ENCODE measurements at regions of chr11 and their contacts with region 1.

Region 1: GRCh38 chr11:35040221-35040942 is 98.6 kb upstream of the CD44 start:
- DNase-seq: no peak
- ATAC-seq: peak; percentile 66
- H3K4me3 Mint-ChIP-seq: peak overlapping the region; percentile 77
- H3K27ac Mint-ChIP-seq: peak overlapping the region; percentile 94
- H3K4me1 Mint-ChIP-seq: peaks cover 75% of the 10 kb centered on the region
- H3K27me3 Mint-ChIP-seq: no peaks in the 10 kb centered on the region
- CTCF ChIP-seq: no peak

Region 2: DNA sequence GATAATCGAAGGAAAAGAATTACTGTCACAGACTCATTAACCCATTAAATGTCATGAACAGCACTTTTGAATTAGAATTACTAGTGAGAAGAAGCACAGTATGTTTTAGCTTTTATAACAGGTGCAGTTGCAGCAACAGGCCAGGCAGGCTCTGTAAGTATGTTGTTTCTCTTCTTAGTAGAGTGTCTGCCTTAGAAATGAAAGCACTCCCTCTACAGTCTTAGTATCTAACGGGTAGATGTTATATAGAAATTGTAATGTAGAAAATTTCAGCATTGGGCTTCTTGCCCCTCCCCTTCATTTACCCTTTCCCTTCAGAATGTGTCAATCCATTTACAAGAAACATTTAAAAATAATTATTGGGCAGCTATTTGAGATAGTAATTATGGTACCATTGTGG is 1695.8 kb before region 1 on chr11:
- CTCF ChIA-PET with region 1: no interaction called
- POLR2A ChIA-PET with region 1: no interaction called
- intact Hi-C with region 1: no loop called
- DNase-seq: no peak
- ATAC-seq: no peak
- H3K4me3 Mint-ChIP-seq: no peak overlapping the region
- H3K27ac Mint-ChIP-seq: peak overlapping the region; percentile 18
- H3K4me1 Mint-ChIP-seq: peaks cover 24% of the 10 kb centered on the region
- H3K27me3 Mint-ChIP-seq: no peaks in the 10 kb centered on the region
- CTCF ChIP-seq: no peak

Region 3: DNA sequence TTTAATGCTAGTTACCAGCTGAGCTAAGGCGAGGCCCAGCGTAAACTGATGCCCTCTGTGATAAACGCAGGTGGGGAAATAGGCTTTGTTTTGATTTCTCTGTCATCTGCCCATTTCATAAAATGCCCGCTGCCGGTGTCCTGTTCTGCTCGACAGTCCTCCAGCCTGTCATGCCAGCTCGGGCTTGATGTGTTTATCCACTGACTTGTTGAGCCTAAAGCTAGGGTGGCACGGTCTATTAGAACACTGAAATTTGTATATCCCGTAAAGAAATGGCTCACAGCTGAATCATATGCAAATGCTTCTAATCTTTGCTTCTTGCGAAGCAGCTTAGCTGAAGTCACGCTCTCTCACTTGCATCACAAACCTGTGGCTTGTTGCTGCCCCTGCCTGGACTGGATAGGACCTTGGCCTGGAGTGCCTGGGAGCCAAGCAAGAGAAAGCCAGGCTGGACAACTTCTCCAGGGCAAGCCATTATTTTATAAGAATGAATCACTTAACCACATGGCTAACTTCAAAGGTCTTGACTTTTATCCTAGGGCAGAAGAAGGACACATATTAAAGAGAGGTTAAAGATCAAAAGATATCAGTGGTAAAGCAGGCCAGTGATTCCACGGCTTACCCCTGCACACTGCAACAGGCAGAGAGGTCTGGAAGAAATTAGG is 386.4 kb before region 1 on chr11:
- CTCF ChIA-PET with region 1: no interaction called
- POLR2A ChIA-PET with region 1: no interaction called
- intact Hi-C with region 1: loop called (anchors 5 kb)
- DNase-seq: no peak
- ATAC-seq: peak; percentile 65
- H3K4me3 Mint-ChIP-seq: peak overlapping the region; percentile 56
- H3K27ac Mint-ChIP-seq: peak overlapping the region; percentile 80
- H3K4me1 Mint-ChIP-seq: peaks cover 54% of the 10 kb centered on the region
- H3K27me3 Mint-ChIP-seq: no peaks in the 10 kb centered on the region
- CTCF ChIP-seq: no peak

Region 4: GRCh38 chr11:34869426-34869825 is 171.0 kb before region 1 on chr11:
- CTCF ChIA-PET with region 1: no interaction called
- POLR2A ChIA-PET with region 1: no interaction called
- intact Hi-C with region 1: no loop called
- DNase-seq: no peak
- ATAC-seq: no peak
- H3K4me3 Mint-ChIP-seq: no peak overlapping the region
- H3K27ac Mint-ChIP-seq: no peak overlapping the region
- H3K4me1 Mint-ChIP-seq: peaks cover 1% of the 10 kb centered on the region
- H3K27me3 Mint-ChIP-seq: no peaks in the 10 kb centered on the region
- CTCF ChIP-seq: no peak

Region 5: GRCh38 chr11:35013514-35014233 is 26.7 kb before region 1 on chr11:
- CTCF ChIA-PET with region 1: interaction called, 4 read pairs
- POLR2A ChIA-PET with region 1: interaction called, 17 read pairs
- intact Hi-C with region 1: loop called (anchors 1 kb)
- DNase-seq: no peak
- ATAC-seq: peak; percentile 47
- H3K4me3 Mint-ChIP-seq: peak overlapping the region; percentile 59
- H3K27ac Mint-ChIP-seq: peak overlapping the region; percentile 90
- H3K4me1 Mint-ChIP-seq: peaks cover 43% of the 10 kb centered on the region
- H3K27me3 Mint-ChIP-seq: no peaks in the 10 kb centered on the region
- CTCF ChIP-seq: no peak

Region 6: DNA sequence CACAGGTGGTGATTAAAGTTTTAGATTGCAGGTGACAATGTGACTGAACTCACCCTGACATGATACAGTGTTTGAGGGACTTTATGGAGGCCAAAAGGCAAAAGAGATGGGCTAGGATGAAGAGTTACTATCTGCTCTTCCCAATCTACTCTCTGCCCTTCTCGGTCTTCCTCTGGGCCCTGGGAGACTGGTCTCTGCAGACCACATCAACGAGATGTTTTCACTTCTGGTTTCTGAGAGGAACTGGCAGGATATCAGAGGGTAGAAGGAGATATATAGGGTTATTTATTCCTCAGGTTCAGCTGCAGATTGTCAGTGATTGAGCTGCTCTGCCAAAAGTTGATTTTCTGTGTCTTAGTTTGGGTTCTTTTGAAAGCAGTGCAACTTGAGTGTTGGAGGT is 66.2 kb after region 1 on chr11:
- CTCF ChIA-PET with region 1: no interaction called
- POLR2A ChIA-PET with region 1: interaction called, 3 read pairs
- intact Hi-C with region 1: loop called (anchors 2 kb)
- DNase-seq: no peak
- ATAC-seq: peak; percentile 95
- H3K4me3 Mint-ChIP-seq: peak overlapping the region; percentile 72
- H3K27ac Mint-ChIP-seq: peak overlapping the region; percentile 83
- H3K4me1 Mint-ChIP-seq: peaks cover 71% of the 10 kb centered on the region
- H3K27me3 Mint-ChIP-seq: no peaks in the 10 kb centered on the region
- CTCF ChIP-seq: no peak

Region 7: DNA sequence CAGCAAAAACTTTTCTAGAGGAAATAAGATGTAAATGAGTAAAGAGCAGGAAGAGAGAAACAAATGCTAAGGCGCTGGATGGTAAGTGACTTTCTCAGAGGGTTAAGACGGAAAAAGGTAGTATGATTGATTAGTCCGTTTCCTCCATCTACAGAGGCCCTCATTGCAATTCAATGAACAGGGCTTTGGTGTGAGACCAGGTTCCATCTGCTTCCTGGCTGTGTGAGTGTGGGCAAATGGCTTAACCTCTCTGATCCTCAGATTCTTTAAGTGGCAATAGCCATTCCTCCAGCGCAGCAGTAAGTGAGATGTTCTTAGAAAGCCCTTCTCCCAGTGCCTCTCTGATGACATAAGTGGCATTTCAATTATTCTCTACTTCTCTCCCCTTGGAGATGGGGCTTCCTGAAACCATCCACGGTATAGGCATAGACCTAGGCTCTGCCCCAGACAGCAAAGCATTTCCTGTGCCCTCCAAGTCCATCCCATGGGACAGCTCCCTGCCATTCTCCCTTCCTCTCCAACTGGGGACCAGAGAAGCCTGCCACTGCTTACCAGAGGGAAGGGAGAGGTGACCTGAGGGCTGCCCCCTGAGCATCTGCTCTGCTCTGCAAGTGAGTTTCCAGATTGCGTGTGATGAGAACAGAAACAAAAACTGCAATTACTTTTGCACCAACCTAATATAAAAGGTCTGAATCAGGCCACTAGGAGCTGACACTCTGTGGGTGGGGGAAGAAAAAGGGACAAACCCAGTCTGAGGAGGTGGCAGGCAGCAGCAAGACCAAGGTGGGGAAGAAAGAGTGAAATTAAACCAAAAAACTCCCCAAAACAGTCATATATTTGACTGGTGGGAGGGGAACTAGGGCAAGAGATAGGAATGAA is 85.9 kb after region 1 on chr11:
- CTCF ChIA-PET with region 1: no interaction called
- POLR2A ChIA-PET with region 1: interaction called, 23 read pairs
- intact Hi-C with region 1: loop called (anchors 1 kb)
- DNase-seq: peak; percentile 49
- ATAC-seq: peak; percentile 71
- H3K4me3 Mint-ChIP-seq: peak overlapping the region; percentile 76
- H3K27ac Mint-ChIP-seq: peak overlapping the region; percentile 97
- H3K4me1 Mint-ChIP-seq: peaks cover 85% of the 10 kb centered on the region
- H3K27me3 Mint-ChIP-seq: no peaks in the 10 kb centered on the region
- CTCF ChIP-seq: no peak

Region 8: DNA sequence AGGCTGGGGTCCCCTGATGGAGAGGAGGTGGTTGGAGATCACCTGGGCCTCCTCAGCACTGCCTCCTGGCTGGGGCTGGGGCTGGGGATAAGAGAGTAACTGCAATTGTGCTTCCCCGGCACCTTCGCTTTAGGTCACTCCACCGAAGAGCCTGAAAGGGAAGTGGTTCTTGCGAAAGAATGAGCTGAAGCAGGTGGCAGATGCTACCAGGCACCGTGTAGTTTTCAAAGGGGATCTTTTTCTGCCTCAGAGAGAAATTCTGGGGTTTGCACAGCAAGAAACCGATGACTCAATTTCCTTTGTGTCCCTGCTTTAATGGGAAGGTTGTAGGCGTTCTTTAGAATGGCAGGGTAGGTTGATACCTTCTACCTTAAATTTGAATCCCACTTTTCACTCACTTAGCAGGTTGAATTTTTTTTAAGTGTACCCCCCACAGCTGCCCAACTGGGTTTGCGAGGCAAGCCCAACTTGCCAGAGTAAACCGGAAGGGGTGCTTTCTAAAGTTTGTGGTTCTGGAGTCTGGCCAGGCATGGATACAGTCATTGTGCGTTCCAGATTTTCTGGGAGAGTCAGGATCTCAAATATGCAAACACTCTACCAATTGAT is 103.9 kb after region 1 on chr11:
- CTCF ChIA-PET with region 1: interaction called, 4 read pairs
- POLR2A ChIA-PET with region 1: interaction called, 20 read pairs
- intact Hi-C with region 1: loop called (anchors 1 kb)
- DNase-seq: peak; percentile 63
- ATAC-seq: peak; percentile 62
- H3K4me3 Mint-ChIP-seq: peak overlapping the region; percentile 97
- H3K27ac Mint-ChIP-seq: peak overlapping the region; percentile 90
- H3K4me1 Mint-ChIP-seq: peaks cover 81% of the 10 kb centered on the region
- H3K27me3 Mint-ChIP-seq: no peaks in the 10 kb centered on the region
- CTCF ChIP-seq: no peak

Region 9: GRCh38 chr11:35305670-35306382 is 265.4 kb after region 1 on chr11:
- CTCF ChIA-PET with region 1: no interaction called
- POLR2A ChIA-PET with region 1: no interaction called
- intact Hi-C with region 1: no loop called
- DNase-seq: no peak
- ATAC-seq: peak; percentile 69
- H3K4me3 Mint-ChIP-seq: no peak overlapping the region
- H3K27ac Mint-ChIP-seq: no peak overlapping the region
- H3K4me1 Mint-ChIP-seq: peaks cover 13% of the 10 kb centered on the region
- H3K27me3 Mint-ChIP-seq: no peaks in the 10 kb centered on the region
- CTCF ChIP-seq: no peak